H1 (cell line): ENCODE measurements at regions of chr5 and their contacts with region 1.

Region 1: GRCh38 chr5:41843456-41844370 is 26.5 kb downstream of the OXCT1 start:
- DNase-seq: no peak
- H3K4me3 ChIP-seq: no peak overlapping the region
- H3K27ac ChIP-seq: no peak overlapping the region
- H3K4me1 ChIP-seq: no peaks in the 10 kb centered on the region
- H3K27me3 ChIP-seq: no peaks in the 10 kb centered on the region
- CTCF ChIP-seq: peak in 2 of 3 experiments; percentile 57 to 58; a peak in 3 of 4 replicates
- EP300 ChIP-seq: no peak
- POLR2A ChIP-seq: no peak
- RAD21 ChIP-seq: peak; percentile 83

Region 2: DNA sequence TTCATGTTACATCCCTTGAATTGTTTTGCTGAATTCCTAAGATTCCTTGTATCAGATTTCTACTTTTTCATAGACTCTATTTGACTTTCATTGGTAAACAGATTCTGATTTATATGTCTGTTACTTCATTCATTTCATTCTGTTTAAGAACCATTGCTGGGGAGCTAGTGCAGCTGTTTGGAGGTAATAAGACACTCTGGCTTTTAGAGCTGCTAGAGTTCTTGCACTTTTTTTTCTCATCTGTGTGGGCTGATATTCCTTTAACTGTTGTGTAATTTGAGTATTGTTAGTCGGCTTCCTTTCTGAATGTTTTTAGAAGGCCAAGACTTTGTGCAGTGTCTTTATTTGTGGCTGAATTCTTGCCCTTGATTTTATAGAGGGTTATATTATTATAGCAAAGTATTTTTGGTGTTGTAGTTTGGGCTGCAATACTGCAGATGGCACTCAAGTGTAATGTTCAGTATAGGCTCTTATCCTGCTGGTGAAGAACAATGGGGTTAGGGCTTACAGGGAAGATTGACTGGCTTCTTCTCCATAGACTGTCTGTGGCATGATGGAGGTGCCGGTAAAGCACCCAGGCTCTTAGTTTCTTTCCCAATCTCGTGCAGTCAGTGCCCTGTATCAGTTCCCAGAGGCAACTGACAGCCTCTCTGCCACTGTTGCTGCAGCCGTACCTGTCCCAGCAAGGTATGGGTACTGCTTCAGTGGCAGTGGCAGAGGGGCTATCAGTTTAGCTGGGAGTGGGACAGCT is 135.7 kb before region 1 on chr5:
- CTCF ChIA-PET with region 1: interaction called, 49 read pairs
- POLR2A ChIA-PET with region 1: interaction called, 4 read pairs
- DNase-seq: peak in 1 of 2 experiments; percentile 59
- H3K4me3 ChIP-seq: no peak overlapping the region
- H3K27ac ChIP-seq: no peak overlapping the region
- H3K4me1 ChIP-seq: peaks cover 0 to 4% (median 0%) of the 10 kb centered on the region in 4 experiments; a peak in 2 of 7 replicates
- H3K27me3 ChIP-seq: no peaks in the 10 kb centered on the region
- CTCF ChIP-seq: peak in 2 of 3 experiments; percentile 49 to 59; a peak in 2 of 4 replicates
- EP300 ChIP-seq: no peak
- POLR2A ChIP-seq: no peak
- RAD21 ChIP-seq: peak; percentile 79 to 80

Region 3: GRCh38 chr5:41754857-41755256 is 88.9 kb before region 1 on chr5:
- CTCF ChIA-PET with region 1: interaction called, 10 read pairs
- POLR2A ChIA-PET with region 1: no interaction called
- DNase-seq: no peak
- H3K4me3 ChIP-seq: no peak overlapping the region
- H3K27ac ChIP-seq: no peak overlapping the region
- H3K4me1 ChIP-seq: no peaks in the 10 kb centered on the region
- H3K27me3 ChIP-seq: no peaks in the 10 kb centered on the region
- CTCF ChIP-seq: peak in 1 of 3 experiments; percentile 28; a peak in 1 of 4 replicates
- EP300 ChIP-seq: no peak
- POLR2A ChIP-seq: no peak
- RAD21 ChIP-seq: 0 out of 4 replicates have a peak, but pooled peaks of 1 of the 2 experiments have one; percentile 2

Region 4: DNA sequence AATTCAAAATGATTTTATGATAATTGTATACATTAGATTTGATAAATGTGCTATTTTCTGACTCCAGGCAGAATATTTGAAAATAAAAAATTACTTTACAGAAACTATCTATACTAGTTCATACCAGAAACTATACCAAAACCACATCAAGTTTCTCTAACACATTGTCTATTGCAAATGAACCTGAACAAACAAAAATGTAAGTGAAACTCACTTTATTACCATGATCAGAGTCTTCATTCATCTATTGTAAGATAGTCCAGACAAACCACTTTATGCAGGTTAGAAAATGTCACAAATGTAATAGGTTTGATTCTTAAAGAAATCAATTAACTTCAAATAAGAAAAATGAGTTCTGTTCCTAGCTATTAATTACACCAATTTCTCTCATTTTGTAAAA is 72.9 kb before region 1 on chr5:
- CTCF ChIA-PET with region 1: interaction called, 10 read pairs
- POLR2A ChIA-PET with region 1: no interaction called
- DNase-seq: no peak
- H3K4me3 ChIP-seq: no peak overlapping the region
- H3K27ac ChIP-seq: no peak overlapping the region
- H3K4me1 ChIP-seq: peaks cover 0 to 5% (median 0%) of the 10 kb centered on the region in 4 experiments; a peak in 1 of 7 replicates
- H3K27me3 ChIP-seq: no peaks in the 10 kb centered on the region
- CTCF ChIP-seq: no peak
- EP300 ChIP-seq: no peak
- POLR2A ChIP-seq: no peak
- RAD21 ChIP-seq: no peak

Region 5: DNA sequence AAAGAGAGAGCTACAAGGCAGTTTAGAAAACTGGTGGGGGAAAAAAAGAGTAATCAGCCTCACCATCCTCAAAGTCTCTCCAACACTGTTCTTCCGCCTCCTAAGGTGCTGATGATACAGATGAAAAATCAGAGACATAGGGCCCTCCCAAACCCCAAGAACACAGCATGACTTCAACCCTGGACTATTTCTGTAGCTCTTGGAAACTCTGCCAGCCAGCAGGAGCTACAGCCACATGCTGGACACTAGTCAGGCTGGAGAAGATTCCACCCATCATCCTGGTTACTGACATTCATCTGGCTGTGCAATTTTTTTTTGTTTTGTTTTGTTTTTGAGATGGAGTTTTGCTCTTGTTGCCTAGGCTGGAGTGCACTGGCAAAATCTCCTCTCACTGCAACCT is 15.9 kb before region 1 on chr5:
- CTCF ChIA-PET with region 1: interaction called, 14 read pairs
- POLR2A ChIA-PET with region 1: no interaction called
- DNase-seq: no peak
- H3K4me3 ChIP-seq: no peak overlapping the region
- H3K27ac ChIP-seq: no peak overlapping the region
- H3K4me1 ChIP-seq: no peaks in the 10 kb centered on the region
- H3K27me3 ChIP-seq: no peaks in the 10 kb centered on the region
- CTCF ChIP-seq: no peak
- EP300 ChIP-seq: no peak
- POLR2A ChIP-seq: no peak
- RAD21 ChIP-seq: no peak

Region 6: DNA sequence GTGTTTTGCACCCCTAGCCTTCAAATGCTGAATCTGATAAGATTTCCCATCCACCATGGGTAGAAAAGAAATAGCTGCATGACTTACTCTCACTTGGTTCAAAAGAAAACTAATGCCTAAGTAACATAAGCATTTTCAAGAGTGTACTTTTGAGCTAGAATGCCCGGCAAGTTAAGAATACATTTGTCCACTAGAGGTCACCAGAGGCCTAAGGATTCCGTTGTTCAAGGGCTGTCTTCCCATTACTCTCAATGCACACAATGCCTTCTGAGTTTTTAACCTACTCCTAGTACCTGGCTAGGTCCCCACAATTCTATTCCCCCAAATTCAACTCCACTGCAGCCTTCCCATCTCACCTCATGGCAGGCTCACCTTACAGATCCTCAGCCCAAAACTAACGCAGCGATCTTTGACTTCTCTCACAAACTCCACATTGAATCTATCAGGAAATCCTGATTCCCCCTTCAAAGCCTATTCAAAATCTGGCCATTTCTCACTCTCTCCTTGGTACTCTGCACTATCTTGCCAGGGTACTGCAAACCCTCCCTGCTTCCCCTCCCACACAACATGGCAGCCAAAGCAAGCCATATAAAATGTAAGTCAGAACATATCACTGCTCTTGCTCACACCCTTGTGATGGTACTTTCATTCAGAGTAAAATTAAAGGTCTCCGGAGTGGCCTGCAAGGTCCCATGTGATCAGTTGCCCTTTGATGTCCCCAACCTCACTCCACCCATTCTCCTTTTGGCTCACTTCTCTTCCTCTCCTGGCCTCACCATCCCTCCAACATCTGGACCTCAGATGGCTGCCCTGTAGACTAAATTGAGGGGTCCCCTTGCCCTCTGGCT is 13.2 kb after region 1 on chr5:
- CTCF ChIA-PET with region 1: interaction called, 10 read pairs
- POLR2A ChIA-PET with region 1: no interaction called
- DNase-seq: peak in 1 of 2 experiments; percentile 60
- H3K4me3 ChIP-seq: no peak overlapping the region
- H3K27ac ChIP-seq: no peak overlapping the region
- H3K4me1 ChIP-seq: no peaks in the 10 kb centered on the region
- H3K27me3 ChIP-seq: peaks cover 0 to 2% (median 0%) of the 10 kb centered on the region in 4 experiments; a peak in 1 of 7 replicates
- CTCF ChIP-seq: peak in 2 of 3 experiments; percentile 70 to 73; a peak in 3 of 4 replicates
- EP300 ChIP-seq: no peak
- POLR2A ChIP-seq: no peak
- RAD21 ChIP-seq: peak; percentile 90 to 91

Region 7: GRCh38 chr5:41878643-41879478 is 35.1 kb after region 1 on chr5:
- CTCF ChIA-PET with region 1: no interaction called
- POLR2A ChIA-PET with region 1: no interaction called
- DNase-seq: no peak
- H3K4me3 ChIP-seq: no peak overlapping the region
- H3K27ac ChIP-seq: no peak overlapping the region
- H3K4me1 ChIP-seq: no peaks in the 10 kb centered on the region
- H3K27me3 ChIP-seq: no peaks in the 10 kb centered on the region
- CTCF ChIP-seq: no peak
- EP300 ChIP-seq: no peak
- POLR2A ChIP-seq: no peak
- RAD21 ChIP-seq: no peak